ENCODE measurements at regions of chr2 and their contacts with region 1.

Region 1: DNA sequence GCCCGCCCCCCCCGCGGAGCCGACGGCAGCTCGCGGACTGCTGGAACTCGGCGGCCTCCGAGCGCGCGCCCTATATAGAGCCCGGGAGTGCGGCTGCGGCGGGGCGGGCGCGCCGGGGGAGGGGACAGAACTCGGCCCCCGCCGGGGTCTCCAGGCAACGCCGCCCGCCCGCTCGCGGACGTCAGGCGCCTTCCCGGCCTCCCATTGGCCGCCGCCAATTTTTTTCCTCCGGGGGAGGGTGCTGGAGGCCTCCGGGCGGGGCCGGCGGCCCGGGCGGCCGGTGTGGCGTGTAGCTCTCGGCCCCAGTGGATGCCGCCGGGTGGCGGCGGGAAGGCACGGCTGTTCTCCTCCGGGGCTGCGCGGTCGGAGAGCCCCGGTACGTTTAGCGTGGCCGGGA is at the start of gene ZFP36L2:
- DNase-seq: no peak
- ATAC-seq: peak; percentile 69
- H3K4me3 ChIP-seq: peak within 1 kb of the TSS; percentile 84
- H3K27ac ChIP-seq: peak within 1 kb of the TSS; percentile 97
- H3K4me1 ChIP-seq: peaks cover 22% of the 10 kb centered on the region
- H3K27me3 ChIP-seq: no peaks in the 10 kb centered on the region
- CTCF ChIP-seq: no peak
- EP300 ChIP-seq: peak in 1 of 2 experiments; percentile 40; a peak in 1 of 4 replicates
- POLR2A ChIP-seq: no peak
- RAD21 ChIP-seq: no peak
- polyA plus RNA-seq, gene ZFP36L2: 25.5 to 43.3 TPM

Region 2: DNA sequence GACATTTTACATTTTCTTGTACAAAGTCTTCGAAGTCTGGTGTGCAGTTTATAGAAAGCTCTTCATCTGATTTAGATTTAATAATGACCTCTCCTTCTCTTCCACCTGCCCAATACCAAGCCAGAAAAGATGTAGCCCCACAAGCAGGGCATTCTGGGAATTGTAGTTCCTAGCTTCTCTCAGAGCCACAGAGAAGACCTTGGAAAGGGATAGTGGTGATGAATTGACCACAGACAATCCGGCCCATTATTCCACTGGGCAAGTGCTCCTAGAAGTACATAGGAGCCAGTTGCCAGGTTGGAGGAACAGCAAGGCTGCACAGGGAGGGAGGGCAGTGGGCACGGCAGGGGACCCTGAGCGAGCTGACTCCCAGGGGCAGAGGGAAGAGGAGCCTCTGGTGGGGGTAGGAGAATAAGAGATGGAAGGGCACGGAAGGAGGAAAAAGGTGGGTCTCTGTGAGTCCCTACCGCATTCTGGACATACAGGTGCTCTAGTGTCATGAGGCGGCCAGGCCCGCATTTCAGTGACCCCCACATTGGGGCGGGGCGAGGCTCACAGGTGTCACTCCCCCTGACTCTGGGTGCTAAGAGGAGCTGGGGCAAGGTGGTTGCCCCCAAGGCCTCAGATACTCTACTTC is 281.7 kb before region 1 on chr2:
- CTCF ChIA-PET with region 1: interaction called, 66 read pairs
- POLR2A ChIA-PET with region 1: interaction called, 6 read pairs
- RAD21 ChIA-PET with region 1: interaction called, 26 read pairs
- SMC1A ChIA-PET with region 1: interaction called, 38 read pairs
- in situ Hi-C with region 1: loop called (anchors 5 kb)
- intact Hi-C with region 1: loop called (anchors 1 kb)
- DNase-seq: no peak
- ATAC-seq: peak; percentile 39; the same call in 2 of the 3 replicates
- H3K4me3 ChIP-seq: no peak overlapping the region
- H3K27ac ChIP-seq: no peak overlapping the region
- H3K4me1 ChIP-seq: no peaks in the 10 kb centered on the region
- H3K27me3 ChIP-seq: no peaks in the 10 kb centered on the region
- CTCF ChIP-seq: no peak
- EP300 ChIP-seq: no peak
- POLR2A ChIP-seq: no peak
- RAD21 ChIP-seq: no peak

Region 3: GRCh38 chr2:43139996-43140621 is 86.4 kb before region 1 on chr2:
- CTCF ChIA-PET with region 1: interaction called, 21 read pairs
- POLR2A ChIA-PET with region 1: interaction called, 6 read pairs
- RAD21 ChIA-PET with region 1: interaction called, 151 read pairs
- SMC1A ChIA-PET with region 1: interaction called, 170 read pairs
- in situ Hi-C with region 1: no loop called
- intact Hi-C with region 1: no loop called
- DNase-seq: no peak
- ATAC-seq: peak; percentile 80
- H3K4me3 ChIP-seq: no peak overlapping the region
- H3K27ac ChIP-seq: no peak overlapping the region
- H3K4me1 ChIP-seq: peaks cover 24% of the 10 kb centered on the region
- H3K27me3 ChIP-seq: no peaks in the 10 kb centered on the region
- CTCF ChIP-seq: no peak
- EP300 ChIP-seq: no peak
- POLR2A ChIP-seq: no peak
- RAD21 ChIP-seq: no peak

Region 4: DNA sequence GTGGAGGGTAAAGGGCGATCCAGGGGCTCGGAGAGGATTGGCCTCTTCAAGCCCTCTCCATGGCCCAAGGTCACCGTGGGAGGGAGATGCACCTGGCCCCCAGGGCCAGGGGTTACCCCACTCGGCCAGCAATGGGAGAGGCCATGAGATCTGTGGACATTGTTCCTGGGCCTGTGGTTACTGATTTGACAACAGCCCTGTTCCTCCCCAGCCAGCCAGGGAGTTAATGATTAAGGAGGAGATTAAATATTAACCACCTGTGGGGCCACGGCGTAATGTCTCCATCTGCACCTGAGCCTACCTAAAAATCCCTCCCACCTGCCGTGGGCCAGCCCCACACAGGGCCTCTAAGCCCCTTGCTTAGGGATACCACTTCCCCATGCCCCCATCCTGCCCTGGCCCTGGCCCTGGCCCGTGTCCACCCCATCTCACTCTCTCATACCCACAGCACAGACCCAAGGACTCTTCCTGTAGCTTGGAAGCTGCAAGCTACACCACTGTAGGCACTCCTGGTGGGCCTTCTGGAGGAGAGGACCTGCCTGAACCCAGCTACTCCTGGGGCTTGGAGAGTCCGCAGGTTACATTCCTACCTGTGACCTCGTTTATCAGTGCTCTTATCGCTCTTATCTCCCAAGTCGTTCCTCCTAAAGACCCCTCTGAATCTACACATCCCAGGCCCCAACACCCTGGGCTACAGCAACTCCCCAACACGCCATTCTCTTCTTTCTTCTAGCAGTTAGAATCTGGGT is 32.3 kb before region 1 on chr2:
- CTCF ChIA-PET with region 1: interaction called, 26 read pairs
- POLR2A ChIA-PET with region 1: interaction called, 30 read pairs
- RAD21 ChIA-PET with region 1: interaction called, 22 read pairs
- SMC1A ChIA-PET with region 1: interaction called, 57 read pairs
- in situ Hi-C with region 1: no loop called
- intact Hi-C with region 1: loop called (anchors 2 kb)
- DNase-seq: peak; percentile 53
- ATAC-seq: peak; percentile 72
- H3K4me3 ChIP-seq: no peak overlapping the region
- H3K27ac ChIP-seq: no peak overlapping the region; the same call in 1 of the 2 replicates
- H3K4me1 ChIP-seq: peaks cover 17% of the 10 kb centered on the region
- H3K27me3 ChIP-seq: no peaks in the 10 kb centered on the region
- CTCF ChIP-seq: no peak
- EP300 ChIP-seq: peak; percentile 22 to 47; a peak in 2 of 4 replicates
- POLR2A ChIP-seq: no peak
- RAD21 ChIP-seq: no peak

Region 5: GRCh38 chr2:43408407-43409160 is 182.0 kb after region 1 on chr2:
- CTCF ChIA-PET with region 1: interaction called, 26 read pairs
- POLR2A ChIA-PET with region 1: interaction called, 5 read pairs
- RAD21 ChIA-PET with region 1: interaction called, 56 read pairs
- SMC1A ChIA-PET with region 1: interaction called, 45 read pairs
- in situ Hi-C with region 1: no loop called
- intact Hi-C with region 1: no loop called
- DNase-seq: peak; percentile 76
- ATAC-seq: peak; percentile 86
- H3K4me3 ChIP-seq: no peak overlapping the region
- H3K27ac ChIP-seq: peak overlapping the region; percentile 94
- H3K4me1 ChIP-seq: peaks cover 50% of the 10 kb centered on the region
- H3K27me3 ChIP-seq: no peaks in the 10 kb centered on the region
- CTCF ChIP-seq: no peak
- EP300 ChIP-seq: peak; percentile 71 to 87; a peak in 2 of 4 replicates
- POLR2A ChIP-seq: no peak
- RAD21 ChIP-seq: no peak

Region 6: GRCh38 chr2:43484323-43484930 is 257.9 kb after region 1 on chr2:
- CTCF ChIA-PET with region 1: interaction called, 128 read pairs
- POLR2A ChIA-PET with region 1: interaction called, 15 read pairs
- RAD21 ChIA-PET with region 1: interaction called, 114 read pairs
- SMC1A ChIA-PET with region 1: interaction called, 118 read pairs
- in situ Hi-C with region 1: loop called (anchors 5 kb)
- intact Hi-C with region 1: loop called (anchors 1 kb)
- DNase-seq: no peak
- ATAC-seq: peak; percentile 34
- H3K4me3 ChIP-seq: no peak overlapping the region
- H3K27ac ChIP-seq: no peak overlapping the region
- H3K4me1 ChIP-seq: peaks cover 22% of the 10 kb centered on the region
- H3K27me3 ChIP-seq: no peaks in the 10 kb centered on the region
- CTCF ChIP-seq: peak in 2 of 3 experiments; percentile 59 to 73; a peak in 5 of 6 replicates
- EP300 ChIP-seq: no peak
- POLR2A ChIP-seq: no peak
- RAD21 ChIP-seq: peak; percentile 76

Region 7: GRCh38 chr2:45067859-45068570 is 1841.5 kb after region 1 on chr2:
- CTCF ChIA-PET with region 1: no interaction called
- POLR2A ChIA-PET with region 1: no interaction called
- RAD21 ChIA-PET with region 1: no interaction called
- SMC1A ChIA-PET with region 1: no interaction called
- in situ Hi-C with region 1: no loop called
- intact Hi-C with region 1: no loop called
- DNase-seq: no peak
- ATAC-seq: no peak
- H3K4me3 ChIP-seq: no peak overlapping the region
- H3K27ac ChIP-seq: no peak overlapping the region
- H3K4me1 ChIP-seq: no peaks in the 10 kb centered on the region
- H3K27me3 ChIP-seq: no peaks in the 10 kb centered on the region; a peak in 1 of 4 replicates
- CTCF ChIP-seq: no peak
- EP300 ChIP-seq: no peak
- POLR2A ChIP-seq: no peak
- RAD21 ChIP-seq: no peak

Measured in GM12878 (cell line).